ENCODE measurements at regions of chr7 and their contacts with region 1.

Region 1: DNA sequence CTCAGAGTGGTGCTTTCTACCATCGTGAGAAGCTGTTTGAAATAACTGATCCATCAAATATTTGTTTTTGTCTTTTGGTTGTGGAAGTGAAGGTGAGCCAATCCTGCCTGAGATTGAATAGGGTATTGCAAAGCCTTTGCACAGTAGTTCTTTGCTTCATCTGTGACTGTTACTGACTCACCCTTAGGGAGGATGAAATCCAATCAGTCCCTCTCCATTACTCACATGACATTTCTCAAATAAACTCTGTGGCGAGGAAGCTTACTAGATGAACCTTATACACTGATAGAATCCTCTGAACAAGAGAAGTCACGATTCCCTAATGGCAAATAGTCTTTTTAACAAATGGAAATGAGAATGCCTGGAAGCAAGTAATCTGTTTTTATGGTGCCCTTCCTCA is 31.9 kb downstream of the HEPACAM2 start:
- DNase-seq: no peak
- ATAC-seq: no peak
- H3K4me3 ChIP-seq: no peak overlapping the region
- H3K27ac ChIP-seq: no peak overlapping the region
- H3K4me1 ChIP-seq: no peaks in the 10 kb centered on the region
- H3K27me3 ChIP-seq: peaks cover 12% of the 10 kb centered on the region
- CTCF ChIP-seq: no peak

Region 2: DNA sequence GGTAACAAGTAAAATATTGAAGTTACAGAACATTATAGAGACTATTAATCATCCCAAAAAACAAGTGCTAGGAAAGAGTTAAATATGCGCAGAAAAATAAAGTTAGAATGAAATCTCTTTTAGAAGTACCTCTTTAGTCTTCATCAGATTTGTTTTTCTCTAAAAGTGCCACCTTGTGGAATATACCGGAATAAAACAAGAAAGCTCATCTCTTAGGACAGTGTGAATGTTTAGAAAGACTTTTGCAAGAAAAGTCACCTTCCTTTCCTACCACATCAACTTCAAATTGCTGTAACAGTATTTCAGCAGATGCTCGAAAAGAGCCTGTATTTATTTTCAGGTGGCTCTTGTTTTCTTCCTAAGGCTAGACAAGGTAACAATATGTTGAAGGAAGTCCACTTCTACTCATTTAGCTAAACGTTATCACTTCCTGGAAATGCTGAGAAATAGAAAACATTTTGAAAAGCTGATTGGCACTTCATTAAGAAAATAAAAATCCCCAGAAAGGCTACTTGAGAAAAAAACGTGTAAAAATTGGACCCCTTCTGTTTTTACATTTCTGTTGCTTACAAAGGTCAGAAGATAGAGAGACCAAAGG is 584.4 kb before region 1 on chr7:
- CTCF ChIA-PET with region 1: no interaction called
- POLR2A ChIA-PET with region 1: interaction called, 10 read pairs
- in situ Hi-C with region 1: no loop called
- intact Hi-C with region 1: no loop called
- DNase-seq: no peak
- ATAC-seq: peak; percentile 74
- H3K4me3 ChIP-seq: no peak overlapping the region
- H3K27ac ChIP-seq: no peak overlapping the region
- H3K4me1 ChIP-seq: no peaks in the 10 kb centered on the region
- H3K27me3 ChIP-seq: no peaks in the 10 kb centered on the region
- CTCF ChIP-seq: peak; percentile 53; the same call in 1 of the 2 replicates

Region 3: DNA sequence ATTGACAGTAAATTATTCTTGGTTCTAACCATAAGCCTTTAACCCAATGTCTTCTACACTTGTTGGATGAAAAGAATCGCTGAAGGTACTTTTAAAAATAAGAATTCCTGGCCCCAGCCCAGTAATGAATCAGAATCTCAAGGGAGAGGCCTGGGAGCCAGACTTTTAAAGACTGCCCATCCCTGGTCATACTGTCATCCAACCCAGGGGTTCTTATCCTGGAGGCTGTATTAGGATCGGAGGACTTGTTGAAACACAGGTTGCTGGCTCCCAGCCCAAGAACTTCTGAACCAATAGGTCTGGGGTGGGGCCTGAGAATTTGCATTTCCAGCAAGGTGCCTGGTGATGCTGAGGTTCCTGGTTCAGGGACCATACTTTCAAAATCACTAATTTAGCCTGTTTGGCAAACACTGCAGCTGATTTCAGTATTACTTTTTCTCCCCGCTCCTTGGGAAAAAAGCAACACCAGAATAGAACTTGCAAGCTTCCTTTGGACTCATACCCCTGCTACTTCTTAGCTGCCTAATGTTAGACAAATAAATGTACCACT is 524.7 kb before region 1 on chr7:
- CTCF ChIA-PET with region 1: no interaction called
- POLR2A ChIA-PET with region 1: no interaction called
- in situ Hi-C with region 1: no loop called
- intact Hi-C with region 1: no loop called
- DNase-seq: no peak
- ATAC-seq: no peak
- H3K4me3 ChIP-seq: no peak overlapping the region
- H3K27ac ChIP-seq: no peak overlapping the region
- H3K4me1 ChIP-seq: peaks cover 5% of the 10 kb centered on the region; the same call in 1 of the 2 replicates
- H3K27me3 ChIP-seq: no peaks in the 10 kb centered on the region
- CTCF ChIP-seq: no peak

Region 4: GRCh38 chr7:93175219-93175618 is 19.2 kb before region 1 on chr7:
- CTCF ChIA-PET with region 1: no interaction called
- POLR2A ChIA-PET with region 1: no interaction called
- in situ Hi-C with region 1: no loop called
- intact Hi-C with region 1: no loop called
- DNase-seq: no peak
- ATAC-seq: no peak
- H3K4me3 ChIP-seq: no peak overlapping the region
- H3K27ac ChIP-seq: no peak overlapping the region
- H3K4me1 ChIP-seq: no peaks in the 10 kb centered on the region
- H3K27me3 ChIP-seq: no peaks in the 10 kb centered on the region
- CTCF ChIP-seq: no peak

Region 5: DNA sequence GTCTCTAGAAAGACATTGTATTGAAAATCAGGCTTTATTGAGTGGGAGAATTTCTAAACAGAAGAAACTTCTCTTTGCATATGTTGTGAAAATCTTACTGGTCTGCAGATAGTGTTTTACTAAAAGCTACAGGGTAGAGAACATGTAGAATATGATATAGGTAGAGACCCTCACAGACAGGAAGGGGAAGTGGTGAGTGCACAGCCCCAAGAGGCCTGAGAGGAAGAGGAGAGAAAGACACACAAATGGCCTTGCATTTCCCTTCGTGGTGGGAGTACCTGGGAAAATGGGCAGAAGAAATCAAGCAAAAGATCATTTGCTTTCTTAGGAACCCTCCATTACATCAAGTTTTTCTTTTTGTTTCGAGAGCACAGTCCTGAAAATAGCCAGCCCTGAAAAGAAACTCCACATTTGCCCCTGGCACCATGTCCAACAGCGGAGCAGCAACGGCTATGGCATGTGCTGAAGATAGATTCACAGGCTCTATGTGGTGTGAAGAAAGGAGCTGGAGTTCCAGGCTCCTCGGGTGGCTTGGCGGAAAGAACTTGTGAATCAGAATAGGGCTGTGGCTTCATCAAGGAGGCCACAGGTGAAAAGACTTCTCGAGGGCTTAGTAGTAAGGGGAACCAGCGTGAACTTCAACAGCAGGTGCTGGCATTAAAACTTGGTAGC is 236.7 kb after region 1 on chr7:
- CTCF ChIA-PET with region 1: no interaction called
- POLR2A ChIA-PET with region 1: no interaction called
- in situ Hi-C with region 1: no loop called
- intact Hi-C with region 1: no loop called
- DNase-seq: no peak
- ATAC-seq: no peak
- H3K4me3 ChIP-seq: no peak overlapping the region
- H3K27ac ChIP-seq: no peak overlapping the region
- H3K4me1 ChIP-seq: no peaks in the 10 kb centered on the region
- H3K27me3 ChIP-seq: no peaks in the 10 kb centered on the region
- CTCF ChIP-seq: no peak

Measured in Panc1 (cell line).